ENCODE measurements at regions of chr12 and their contacts with region 1.

Region 1: GRCh38 chr12:14365294-14366208 is at the start of gene ATF7IP:
- DNase-seq: peak; percentile 99
- ATAC-seq: peak; percentile 83
- H3K4me3 ChIP-seq: peak within 1 kb of the TSS; percentile 71 to 97 (median 82)
- H3K4me3 Mint-ChIP-seq: peak within 1 kb of the TSS; percentile 84
- H3K27ac ChIP-seq: peak within 1 kb of the TSS; percentile 98 to 99
- H3K27ac Mint-ChIP-seq: peak within 1 kb of the TSS; percentile 95
- H3K4me1 ChIP-seq: peaks cover 45 to 46% of the 10 kb centered on the region in 2 donors
- H3K4me1 Mint-ChIP-seq: peaks cover 40% of the 10 kb centered on the region
- H3K27me3 ChIP-seq: no peaks in the 10 kb centered on the region
- H3K27me3 Mint-ChIP-seq: no peaks in the 10 kb centered on the region
- CTCF ChIP-seq: peak; percentile 49
- total RNA-seq, gene ATF7IP: 201 and 208 TPM in 2 replicates

Region 2: GRCh38 chr12:13652105-13652504 is 713.4 kb before region 1 on chr12:
- CTCF ChIA-PET with region 1: no interaction called
- POLR2A ChIA-PET with region 1: no interaction called
- intact Hi-C with region 1: no loop called
- DNase-seq: no peak
- ATAC-seq: no peak
- H3K4me3 ChIP-seq: no peak overlapping the region
- H3K4me3 Mint-ChIP-seq: no peak overlapping the region
- H3K27ac ChIP-seq: no peak overlapping the region
- H3K27ac Mint-ChIP-seq: no peak overlapping the region
- H3K4me1 ChIP-seq: no peaks in the 10 kb centered on the region
- H3K4me1 Mint-ChIP-seq: no peaks in the 10 kb centered on the region
- H3K27me3 ChIP-seq: peaks cover 0 to 2% (median 0%) of the 10 kb centered on the region in 4 experiments
- H3K27me3 Mint-ChIP-seq: no peaks in the 10 kb centered on the region
- CTCF ChIP-seq: no peak

Region 3: GRCh38 chr12:14185427-14186192 is 179.9 kb before region 1 on chr12:
- CTCF ChIA-PET with region 1: interaction called, 17 read pairs
- POLR2A ChIA-PET with region 1: no interaction called
- intact Hi-C with region 1: loop called (anchors 2 kb)
- DNase-seq: peak; percentile 69
- ATAC-seq: peak; percentile 76
- H3K4me3 ChIP-seq: peak overlapping the region in 3 of 5 experiments; percentile 30 to 52 (median 40)
- H3K4me3 Mint-ChIP-seq: peak overlapping the region; percentile 85
- H3K27ac ChIP-seq: no peak overlapping the region
- H3K27ac Mint-ChIP-seq: peak overlapping the region; percentile 88
- H3K4me1 ChIP-seq: peaks cover 13 to 21% of the 10 kb centered on the region in 2 donors
- H3K4me1 Mint-ChIP-seq: peaks cover 20% of the 10 kb centered on the region
- H3K27me3 ChIP-seq: no peaks in the 10 kb centered on the region
- H3K27me3 Mint-ChIP-seq: no peaks in the 10 kb centered on the region
- CTCF ChIP-seq: peak; percentile 81

Region 4: GRCh38 chr12:14272956-14273907 is 92.3 kb before region 1 on chr12:
- CTCF ChIA-PET with region 1: interaction called, 16 read pairs
- POLR2A ChIA-PET with region 1: interaction called, 12 read pairs
- intact Hi-C with region 1: no loop called
- DNase-seq: peak; percentile 50
- ATAC-seq: peak; percentile 60
- H3K4me3 ChIP-seq: peak overlapping the region in 1 of 5 experiments; percentile 0
- H3K4me3 Mint-ChIP-seq: peak overlapping the region; percentile 46
- H3K27ac ChIP-seq: peak overlapping the region; percentile 55 to 65
- H3K27ac Mint-ChIP-seq: peak overlapping the region; percentile 78
- H3K4me1 ChIP-seq: peaks cover 40 to 49% of the 10 kb centered on the region in 2 donors
- H3K4me1 Mint-ChIP-seq: peaks cover 45% of the 10 kb centered on the region
- H3K27me3 ChIP-seq: no peaks in the 10 kb centered on the region
- H3K27me3 Mint-ChIP-seq: no peaks in the 10 kb centered on the region
- CTCF ChIP-seq: no peak

Region 5: DNA sequence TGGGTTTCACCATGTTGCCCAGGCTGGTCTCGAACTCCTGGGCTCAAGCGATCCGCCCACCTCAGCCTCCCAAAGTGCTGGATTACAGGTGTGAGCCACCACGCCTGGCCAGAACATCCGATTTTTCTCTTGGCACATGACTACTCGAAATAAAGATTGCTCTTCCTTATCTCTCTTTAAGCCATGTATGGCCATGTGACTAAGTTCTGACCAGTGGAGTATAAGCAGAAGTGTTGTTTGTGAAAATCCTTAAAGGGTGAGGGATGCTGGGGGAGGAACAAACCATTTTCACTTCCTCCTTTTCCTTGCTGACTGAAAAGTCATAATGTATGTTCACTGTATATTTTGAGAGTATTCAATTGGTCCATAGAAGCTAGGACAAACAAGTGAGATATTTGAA is 50.8 kb before region 1 on chr12:
- CTCF ChIA-PET with region 1: interaction called, 10 read pairs
- POLR2A ChIA-PET with region 1: interaction called, 3 read pairs
- intact Hi-C with region 1: no loop called
- DNase-seq: peak; percentile 51
- ATAC-seq: peak; percentile 45
- H3K4me3 ChIP-seq: peak overlapping the region in 1 of 5 experiments; percentile 7
- H3K4me3 Mint-ChIP-seq: peak overlapping the region; percentile 24
- H3K27ac ChIP-seq: peak overlapping the region in 1 of 2 donors; percentile 58
- H3K27ac Mint-ChIP-seq: peak overlapping the region; percentile 78
- H3K4me1 ChIP-seq: peaks cover 25 to 27% of the 10 kb centered on the region in 2 donors
- H3K4me1 Mint-ChIP-seq: peaks cover 33% of the 10 kb centered on the region
- H3K27me3 ChIP-seq: no peaks in the 10 kb centered on the region
- H3K27me3 Mint-ChIP-seq: no peaks in the 10 kb centered on the region
- CTCF ChIP-seq: no peak

Region 6: DNA sequence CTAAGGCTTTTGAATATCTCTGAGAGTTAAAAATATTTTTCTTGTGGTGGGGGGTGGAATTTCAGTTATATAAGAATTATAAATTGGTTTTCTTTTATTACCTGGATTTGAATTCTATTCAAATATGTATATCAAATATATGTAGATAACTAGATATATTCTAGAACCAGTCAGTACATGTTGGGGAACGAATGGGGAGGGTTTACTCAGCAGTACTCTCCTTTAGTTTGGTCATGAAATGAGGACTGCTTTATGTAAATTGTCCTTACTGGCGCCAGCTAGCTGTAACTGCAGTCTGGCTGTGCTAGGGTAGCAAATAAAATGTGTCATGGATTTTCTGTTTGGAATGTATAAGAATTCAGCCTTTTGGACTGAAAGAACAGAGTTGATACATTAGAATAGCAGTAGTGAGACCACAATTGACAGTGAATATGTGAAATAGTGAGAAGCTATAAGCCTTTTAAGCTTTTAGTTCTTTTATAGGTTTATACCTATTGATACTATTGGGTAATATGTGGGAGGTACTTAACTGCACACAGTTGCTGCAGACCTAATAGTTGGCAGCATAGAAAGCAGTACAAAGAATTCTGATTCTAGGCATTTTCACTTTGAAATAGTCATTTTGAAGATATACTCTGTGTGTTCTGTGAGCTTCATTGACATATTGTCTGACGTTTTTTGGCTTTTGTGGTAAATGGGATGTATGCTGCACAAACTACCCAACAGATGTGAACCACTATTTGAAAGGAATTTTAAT is 28.9 kb after region 1 on chr12:
- CTCF ChIA-PET with region 1: interaction called, 11 read pairs
- POLR2A ChIA-PET with region 1: interaction called, 4 read pairs
- intact Hi-C with region 1: loop called (anchors 2 kb)
- DNase-seq: peak; percentile 71
- ATAC-seq: peak; percentile 69
- H3K4me3 ChIP-seq: peak overlapping the region in 4 of 5 experiments; percentile 0 to 55 (median 18)
- H3K4me3 Mint-ChIP-seq: peak overlapping the region; percentile 56
- H3K27ac ChIP-seq: peak overlapping the region; percentile 62 to 67
- H3K27ac Mint-ChIP-seq: peak overlapping the region; percentile 78
- H3K4me1 ChIP-seq: peaks cover 32 to 55% of the 10 kb centered on the region in 2 donors
- H3K4me1 Mint-ChIP-seq: peaks cover 69% of the 10 kb centered on the region
- H3K27me3 ChIP-seq: no peaks in the 10 kb centered on the region
- H3K27me3 Mint-ChIP-seq: no peaks in the 10 kb centered on the region
- CTCF ChIP-seq: no peak

Region 7: GRCh38 chr12:14408208-14408607 is 42.7 kb after region 1 on chr12:
- CTCF ChIA-PET with region 1: no interaction called
- POLR2A ChIA-PET with region 1: no interaction called
- intact Hi-C with region 1: no loop called
- DNase-seq: no peak
- ATAC-seq: no peak
- H3K4me3 ChIP-seq: no peak overlapping the region
- H3K4me3 Mint-ChIP-seq: no peak overlapping the region
- H3K27ac ChIP-seq: no peak overlapping the region
- H3K27ac Mint-ChIP-seq: no peak overlapping the region
- H3K4me1 ChIP-seq: peaks cover 10 to 37% of the 10 kb centered on the region in 2 donors
- H3K4me1 Mint-ChIP-seq: peaks cover 53% of the 10 kb centered on the region
- H3K27me3 ChIP-seq: no peaks in the 10 kb centered on the region
- H3K27me3 Mint-ChIP-seq: no peaks in the 10 kb centered on the region
- CTCF ChIP-seq: no peak

Region 8: GRCh38 chr12:14427929-14428328 is 62.4 kb after region 1 on chr12:
- CTCF ChIA-PET with region 1: no interaction called
- POLR2A ChIA-PET with region 1: no interaction called
- intact Hi-C with region 1: no loop called
- DNase-seq: no peak
- ATAC-seq: no peak
- H3K4me3 ChIP-seq: no peak overlapping the region
- H3K4me3 Mint-ChIP-seq: no peak overlapping the region
- H3K27ac ChIP-seq: peak overlapping the region in 1 of 2 donors; percentile 48
- H3K27ac Mint-ChIP-seq: peak overlapping the region; percentile 21
- H3K4me1 ChIP-seq: peaks cover 0 to 18% of the 10 kb centered on the region in 2 donors
- H3K4me1 Mint-ChIP-seq: peaks cover 64% of the 10 kb centered on the region
- H3K27me3 ChIP-seq: no peaks in the 10 kb centered on the region
- H3K27me3 Mint-ChIP-seq: no peaks in the 10 kb centered on the region
- CTCF ChIP-seq: no peak

Region 9: DNA sequence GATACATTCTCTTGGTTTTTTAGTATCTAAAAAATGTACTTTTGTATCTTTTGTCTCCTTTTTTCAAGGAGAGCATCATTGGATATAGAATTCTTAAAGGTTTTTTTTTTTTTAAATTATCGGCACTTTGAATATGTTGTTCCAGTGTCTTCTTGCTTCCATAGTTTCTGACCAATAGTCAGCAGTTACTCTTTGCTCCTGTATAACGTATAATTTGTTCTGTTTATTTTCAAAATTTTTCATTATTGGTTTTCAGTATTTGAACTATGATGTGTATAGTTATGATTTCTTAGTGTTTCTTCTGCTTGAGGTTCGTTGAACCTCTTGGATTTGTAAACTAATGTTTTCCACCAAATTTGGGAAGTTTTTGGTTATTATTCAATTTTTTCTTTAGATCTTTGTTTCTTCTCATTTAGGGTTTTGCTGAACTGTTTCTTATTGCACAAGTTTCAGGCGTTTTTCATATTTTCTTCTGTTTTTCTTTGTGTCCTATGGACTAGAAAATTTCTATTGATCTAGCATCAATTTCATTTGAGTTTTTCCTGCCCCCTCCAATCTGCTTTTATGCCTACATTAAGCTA is 108.2 kb after region 1 on chr12:
- CTCF ChIA-PET with region 1: interaction called, 3 read pairs
- POLR2A ChIA-PET with region 1: no interaction called
- intact Hi-C with region 1: loop called (anchors 10 kb)
- DNase-seq: peak; percentile 42
- ATAC-seq: no peak
- H3K4me3 ChIP-seq: no peak overlapping the region
- H3K4me3 Mint-ChIP-seq: no peak overlapping the region
- H3K27ac ChIP-seq: no peak overlapping the region
- H3K27ac Mint-ChIP-seq: no peak overlapping the region
- H3K4me1 ChIP-seq: no peaks in the 10 kb centered on the region
- H3K4me1 Mint-ChIP-seq: no peaks in the 10 kb centered on the region
- H3K27me3 ChIP-seq: no peaks in the 10 kb centered on the region
- H3K27me3 Mint-ChIP-seq: no peaks in the 10 kb centered on the region
- CTCF ChIP-seq: no peak

Region 10: GRCh38 chr12:14668591-14668990 is 303.0 kb after region 1 on chr12:
- CTCF ChIA-PET with region 1: no interaction called
- POLR2A ChIA-PET with region 1: no interaction called
- intact Hi-C with region 1: no loop called
- DNase-seq: no peak
- ATAC-seq: no peak
- H3K4me3 ChIP-seq: no peak overlapping the region
- H3K4me3 Mint-ChIP-seq: no peak overlapping the region
- H3K27ac ChIP-seq: no peak overlapping the region
- H3K27ac Mint-ChIP-seq: no peak overlapping the region
- H3K4me1 ChIP-seq: no peaks in the 10 kb centered on the region
- H3K4me1 Mint-ChIP-seq: peaks cover 12% of the 10 kb centered on the region
- H3K27me3 ChIP-seq: peaks cover 0 to 1% (median 0%) of the 10 kb centered on the region in 4 experiments
- H3K27me3 Mint-ChIP-seq: peaks cover 1% of the 10 kb centered on the region
- CTCF ChIP-seq: no peak

Region 11: DNA sequence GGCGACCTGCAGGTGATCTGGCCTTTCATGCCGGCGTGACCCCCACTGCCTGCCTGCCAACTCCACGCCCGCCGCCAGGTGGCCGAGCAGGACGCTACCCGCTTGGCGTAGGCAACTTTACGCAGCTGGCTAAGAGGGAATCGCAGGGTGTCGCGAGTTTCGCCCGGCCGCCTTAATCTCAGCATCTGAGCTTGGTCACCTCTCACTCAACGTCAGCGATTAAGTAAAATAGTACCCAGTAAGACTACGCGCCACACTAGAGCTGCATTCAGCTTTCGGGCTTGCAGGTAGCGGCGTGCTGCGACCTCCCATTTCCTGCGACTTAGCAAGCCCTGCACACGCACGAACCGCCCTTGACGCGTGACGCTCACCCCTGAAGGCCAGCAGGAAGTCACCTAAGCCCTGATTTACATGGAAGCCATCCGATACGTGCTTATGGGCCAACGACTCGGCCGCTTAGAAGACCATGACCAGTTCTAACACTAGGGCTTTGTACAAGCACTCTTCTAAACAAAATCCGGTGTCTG is 404.5 kb after region 1 on chr12:
- CTCF ChIA-PET with region 1: interaction called, 8 read pairs
- POLR2A ChIA-PET with region 1: interaction called, 9 read pairs
- intact Hi-C with region 1: loop called (anchors 2 kb)
- DNase-seq: peak; percentile 97
- ATAC-seq: peak; percentile 57
- H3K4me3 ChIP-seq: peak overlapping the region; percentile 78 to 98 (median 93)
- H3K4me3 Mint-ChIP-seq: peak overlapping the region; percentile 97
- H3K27ac ChIP-seq: peak overlapping the region; percentile 94 to 96
- H3K27ac Mint-ChIP-seq: peak overlapping the region; percentile 97
- H3K4me1 ChIP-seq: peaks cover 28 to 45% of the 10 kb centered on the region in 2 donors
- H3K4me1 Mint-ChIP-seq: peaks cover 55% of the 10 kb centered on the region
- H3K27me3 ChIP-seq: no peaks in the 10 kb centered on the region
- H3K27me3 Mint-ChIP-seq: no peaks in the 10 kb centered on the region
- CTCF ChIP-seq: peak; percentile 86